HepG2 (cell line): ENCODE measurements at regions of chr2 and their contacts with region 1.

Region 1: GRCh38 chr2:203782262-203782976 is 76.0 kb downstream of the CD28 start:
- DNase-seq: peak; percentile 78
- ATAC-seq: peak; percentile 10; the same call in 1 of the 3 replicates
- H3K4me3 ChIP-seq: no peak overlapping the region
- H3K27ac ChIP-seq: peak overlapping the region; percentile 93
- H3K4me1 ChIP-seq: peaks cover 60% of the 10 kb centered on the region
- H3K27me3 ChIP-seq: no peaks in the 10 kb centered on the region
- CTCF ChIP-seq: peak; percentile 78
- EP300 ChIP-seq: no peak
- POLR2A ChIP-seq: no peak
- RAD21 ChIP-seq: peak; percentile 73

Region 2: DNA sequence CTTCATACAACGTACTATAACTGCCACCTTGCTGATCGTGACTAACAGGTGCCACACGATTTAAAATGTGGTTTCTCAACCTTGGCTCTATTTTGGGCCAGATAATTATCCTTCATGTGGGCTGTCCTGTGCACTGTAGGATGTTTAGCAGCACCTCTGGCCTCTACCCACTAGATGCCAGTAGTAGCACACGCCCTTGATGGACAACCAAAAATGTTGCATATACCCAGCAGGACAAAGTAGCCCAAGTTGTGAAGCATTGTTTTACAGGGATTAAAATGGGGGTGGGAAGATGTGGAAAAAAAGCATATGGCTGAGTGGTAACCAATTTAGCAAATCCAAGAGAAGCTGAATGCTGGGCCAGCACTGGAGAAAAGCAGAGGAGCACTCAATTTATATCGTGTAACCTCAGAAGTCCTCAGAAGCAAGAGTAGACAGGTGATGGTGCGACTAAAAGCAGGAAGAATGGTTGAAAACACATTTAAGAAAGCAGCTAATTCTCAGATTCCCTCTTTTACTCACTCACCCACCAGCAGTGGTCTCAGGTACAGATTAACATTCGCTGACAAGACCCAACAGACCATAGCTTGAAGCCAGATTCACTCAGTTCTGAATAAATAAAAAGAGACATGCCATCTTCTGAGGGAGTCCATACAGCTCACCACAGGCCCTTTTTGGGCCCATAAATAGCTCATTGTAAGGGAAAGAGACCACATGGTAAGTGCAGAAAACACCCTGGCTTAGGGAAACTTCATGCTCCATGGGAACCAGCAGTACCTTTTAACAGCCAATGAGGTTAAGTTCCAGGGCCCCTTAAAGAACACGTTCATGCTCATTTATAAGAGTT is 297.9 kb before region 1 on chr2:
- CTCF ChIA-PET with region 1: no interaction called
- POLR2A ChIA-PET with region 1: no interaction called
- in situ Hi-C with region 1: no loop called
- intact Hi-C with region 1: loop called (anchors 1 kb)
- DNase-seq: peak; percentile 46
- ATAC-seq: peak; percentile 94
- H3K4me3 ChIP-seq: no peak overlapping the region
- H3K27ac ChIP-seq: no peak overlapping the region
- H3K4me1 ChIP-seq: 0 out of 2 replicates have a peak, but pooled peaks cover under 1% of the 10 kb centered on the region
- H3K27me3 ChIP-seq: no peaks in the 10 kb centered on the region
- CTCF ChIP-seq: peak; percentile 77
- EP300 ChIP-seq: no peak
- POLR2A ChIP-seq: no peak
- RAD21 ChIP-seq: peak; percentile 83

Region 3: DNA sequence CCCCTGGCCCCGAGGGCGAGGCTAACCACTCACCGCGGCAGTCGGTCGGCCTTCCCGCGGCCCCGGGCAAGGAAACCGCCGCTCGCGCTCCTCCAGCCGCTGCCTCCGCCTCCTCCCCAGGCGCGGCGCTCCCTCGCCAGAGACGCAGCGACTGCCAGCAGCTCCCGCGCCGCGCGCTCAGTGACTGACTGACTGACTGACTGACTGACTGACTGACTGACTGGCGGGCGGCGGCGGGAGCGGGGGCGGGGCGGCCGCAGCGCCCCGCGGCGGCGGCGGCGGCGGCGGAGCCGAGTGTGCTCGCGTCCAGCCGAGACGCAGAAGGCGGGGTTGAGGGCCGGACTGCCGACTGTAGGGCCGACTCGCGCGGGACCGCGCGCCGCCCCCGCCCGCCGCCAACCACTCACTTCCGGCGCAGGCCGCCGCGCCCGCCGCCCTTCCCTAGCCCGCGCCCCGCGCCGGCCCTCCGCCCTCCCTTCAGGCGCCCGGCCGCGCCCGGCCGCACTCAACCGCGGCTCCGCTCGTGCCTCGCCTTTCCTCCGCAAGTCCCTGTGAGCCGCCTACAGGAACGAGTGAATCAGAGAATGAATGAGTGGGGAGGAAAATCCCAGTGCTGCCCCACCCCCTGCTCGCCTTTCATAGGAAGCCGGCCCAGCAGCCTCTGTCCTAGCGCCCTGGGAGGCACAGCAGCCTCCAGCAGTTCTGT is 247.2 kb before region 1 on chr2 and contains the start of gene RAPH1:
- CTCF ChIA-PET with region 1: no interaction called
- POLR2A ChIA-PET with region 1: interaction called, 16 read pairs
- in situ Hi-C with region 1: no loop called
- intact Hi-C with region 1: loop called (anchors 2 kb)
- DNase-seq: peak; percentile 75
- ATAC-seq: peak; percentile 92
- H3K4me3 ChIP-seq: peak within 1 kb of the TSS; percentile 97 to 99 (median 97)
- H3K27ac ChIP-seq: peak within 1 kb of the TSS; percentile 85
- H3K4me1 ChIP-seq: peaks cover 30% of the 10 kb centered on the region
- H3K27me3 ChIP-seq: no peaks in the 10 kb centered on the region; a peak in 1 of 5 replicates
- CTCF ChIP-seq: peak; percentile 12; the same call in 1 of the 2 replicates
- EP300 ChIP-seq: no peak; a peak in 1 of 4 replicates
- POLR2A ChIP-seq: peak; percentile 70 to 79
- RAD21 ChIP-seq: peak; percentile 43
- total RNA-seq, gene RAPH1: 6.7 and 17.9 TPM in 2 replicates

Region 4: DNA sequence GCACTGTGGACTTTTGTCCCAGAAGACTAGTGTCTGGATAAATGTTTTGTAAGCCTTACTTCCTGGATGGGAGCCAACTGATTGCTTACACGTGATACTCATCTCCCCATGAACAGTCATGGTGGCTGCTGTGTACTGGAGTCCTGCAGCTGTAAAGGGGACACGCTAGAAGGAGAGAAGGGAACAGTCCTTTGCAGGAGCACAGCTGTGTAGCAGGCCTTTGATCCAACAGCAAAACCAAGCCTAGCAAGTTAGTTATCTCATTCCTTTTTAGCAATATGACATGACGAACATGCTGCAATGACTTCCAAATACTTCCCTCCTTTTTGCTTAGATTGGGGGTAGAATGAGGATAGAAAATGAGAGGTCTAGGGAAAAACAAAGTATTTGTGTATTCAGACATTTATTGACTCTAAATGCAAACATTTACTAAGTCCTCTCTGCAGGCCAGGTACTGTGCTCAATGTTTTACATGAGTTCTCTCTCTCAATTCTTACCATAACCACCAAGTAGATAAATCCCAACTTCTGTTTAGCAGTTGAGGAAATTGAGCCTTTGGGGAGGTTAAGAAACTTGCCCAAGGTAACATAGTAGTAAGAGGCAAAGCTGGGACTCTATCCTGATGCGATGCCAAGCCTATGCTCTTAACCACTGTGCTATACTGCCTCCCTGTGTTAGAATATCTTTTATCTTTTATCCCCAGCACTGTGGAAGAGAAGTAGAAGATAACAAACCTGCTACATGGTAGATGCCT is 131.4 kb before region 1 on chr2:
- CTCF ChIA-PET with region 1: no interaction called
- POLR2A ChIA-PET with region 1: interaction called, 44 read pairs
- in situ Hi-C with region 1: loop called (anchors 5 kb)
- intact Hi-C with region 1: loop called (anchors 1 kb)
- DNase-seq: peak; percentile 98
- ATAC-seq: peak; percentile 89
- H3K4me3 ChIP-seq: peak overlapping the region; percentile 24 to 59 (median 35); a peak in 5 of 6 replicates
- H3K27ac ChIP-seq: peak overlapping the region; percentile 91
- H3K4me1 ChIP-seq: peaks cover 73% of the 10 kb centered on the region
- H3K27me3 ChIP-seq: no peaks in the 10 kb centered on the region
- CTCF ChIP-seq: peak; percentile 78
- EP300 ChIP-seq: peak in 1 of 2 experiments; percentile 90; a peak in 2 of 4 replicates
- POLR2A ChIP-seq: peak in 1 of 2 experiments; percentile 62; a peak in 2 of 4 replicates
- RAD21 ChIP-seq: peak; percentile 59; the same call in 1 of the 2 replicates

Region 5: GRCh38 chr2:203714106-203714505 is 68.3 kb before region 1 on chr2:
- CTCF ChIA-PET with region 1: no interaction called
- POLR2A ChIA-PET with region 1: no interaction called
- in situ Hi-C with region 1: no loop called
- intact Hi-C with region 1: loop called (anchors 5 kb)
- DNase-seq: peak; percentile 74
- ATAC-seq: peak; percentile 84
- H3K4me3 ChIP-seq: no peak overlapping the region
- H3K27ac ChIP-seq: no peak overlapping the region
- H3K4me1 ChIP-seq: peaks cover 27% of the 10 kb centered on the region
- H3K27me3 ChIP-seq: no peaks in the 10 kb centered on the region
- CTCF ChIP-seq: no peak
- EP300 ChIP-seq: peak in 1 of 2 experiments; percentile 61; a peak in 1 of 4 replicates
- POLR2A ChIP-seq: no peak
- RAD21 ChIP-seq: no peak

Region 6: DNA sequence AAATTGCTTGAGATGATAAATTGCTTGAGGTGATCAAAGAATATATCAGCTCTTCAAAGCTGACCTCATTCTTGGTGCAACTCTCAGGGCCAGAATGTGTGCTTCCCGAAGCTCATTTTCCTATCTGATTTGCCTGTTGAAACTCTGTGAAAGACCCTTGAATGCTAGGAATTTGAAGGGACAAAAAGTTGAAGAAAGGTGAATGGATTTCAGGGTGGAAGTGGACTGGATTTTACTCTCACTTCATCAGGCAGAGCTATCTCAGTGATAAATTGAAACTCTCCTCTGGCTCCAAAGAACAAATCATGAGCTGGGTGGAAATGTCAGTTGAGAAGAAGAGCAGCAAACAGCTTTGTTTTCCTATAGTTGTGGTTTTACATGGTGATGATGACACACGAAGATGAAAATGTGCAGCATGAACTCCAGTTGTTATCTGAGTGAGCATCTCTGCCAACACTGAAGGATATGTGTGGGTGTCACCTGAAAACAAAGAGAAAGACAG is 41.6 kb before region 1 on chr2:
- CTCF ChIA-PET with region 1: no interaction called
- POLR2A ChIA-PET with region 1: no interaction called
- in situ Hi-C with region 1: no loop called
- intact Hi-C with region 1: no loop called
- DNase-seq: no peak
- ATAC-seq: no peak
- H3K4me3 ChIP-seq: no peak overlapping the region
- H3K27ac ChIP-seq: no peak overlapping the region
- H3K4me1 ChIP-seq: peaks cover 20% of the 10 kb centered on the region
- H3K27me3 ChIP-seq: no peaks in the 10 kb centered on the region; a peak in 1 of 5 replicates
- CTCF ChIP-seq: no peak
- EP300 ChIP-seq: no peak
- POLR2A ChIP-seq: no peak
- RAD21 ChIP-seq: no peak

Region 7: GRCh38 chr2:203960811-203961210 is 178.4 kb after region 1 on chr2:
- CTCF ChIA-PET with region 1: no interaction called
- POLR2A ChIA-PET with region 1: no interaction called
- in situ Hi-C with region 1: no loop called
- intact Hi-C with region 1: no loop called
- DNase-seq: no peak
- ATAC-seq: no peak
- H3K4me3 ChIP-seq: no peak overlapping the region
- H3K27ac ChIP-seq: no peak overlapping the region
- H3K4me1 ChIP-seq: no peaks in the 10 kb centered on the region
- H3K27me3 ChIP-seq: peaks cover 0 to 11% of the 10 kb centered on the region in 2 experiments; a peak in 3 of 5 replicates
- CTCF ChIP-seq: no peak
- EP300 ChIP-seq: no peak
- POLR2A ChIP-seq: no peak
- RAD21 ChIP-seq: no peak